ENCODE measurements at regions of chr20 and their contacts with region 1.

Region 1: GRCh38 chr20:63009045-63009961 is 2.5 kb upstream of the BHLHE23 start:
- DNase-seq: peak; percentile 96
- H3K27ac ChIP-seq: no peak overlapping the region
- CTCF ChIP-seq: peak; percentile 98

Region 2: DNA sequence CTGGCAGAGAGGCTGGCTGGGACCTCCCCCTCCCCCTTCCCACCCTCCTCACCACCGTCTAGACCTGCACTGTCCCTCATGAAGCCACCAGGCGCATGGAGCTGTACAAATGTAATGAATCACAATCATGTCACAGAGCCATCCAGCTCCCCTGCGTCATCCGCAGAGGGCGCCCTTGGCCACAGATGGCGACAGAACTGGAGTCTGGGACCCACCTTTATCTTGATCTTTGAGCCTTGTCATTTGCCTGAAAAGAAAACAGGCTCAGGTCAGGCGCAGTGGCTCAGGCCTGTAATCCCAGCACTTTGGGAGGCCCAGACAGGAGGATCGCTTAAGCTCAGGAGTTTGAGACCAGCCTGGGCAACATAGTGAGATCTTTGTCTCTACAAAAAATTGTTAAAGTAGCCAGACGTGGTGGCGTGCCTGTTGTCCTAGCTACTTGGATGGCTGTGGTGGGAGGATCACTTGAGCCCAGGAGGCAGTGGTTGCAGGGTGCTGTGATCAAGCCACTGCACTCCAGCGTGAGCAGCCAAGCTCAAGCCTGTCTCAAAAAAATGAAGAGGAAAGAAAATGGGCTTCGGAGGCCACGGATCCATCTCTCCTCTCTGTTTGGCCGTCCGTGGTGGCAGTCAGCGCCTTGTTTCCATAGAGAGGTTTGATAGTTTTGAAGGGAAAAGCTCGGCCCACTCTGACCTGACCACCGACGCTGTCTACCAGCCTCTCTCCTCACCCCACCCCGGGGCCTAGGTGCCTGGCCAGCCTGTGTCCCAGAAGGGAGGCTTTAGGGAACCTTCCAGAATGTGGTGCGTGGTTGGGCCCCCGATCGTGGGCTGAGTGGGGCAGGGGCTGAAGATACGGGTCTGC is 186.3 kb before region 1 on chr20:
- CTCF ChIA-PET with region 1: interaction called, 13 read pairs
- POLR2A ChIA-PET with region 1: no interaction called
- DNase-seq: peak; percentile 55
- H3K27ac ChIP-seq: peak overlapping the region; percentile 47
- CTCF ChIP-seq: peak; percentile 65

Region 3: DNA sequence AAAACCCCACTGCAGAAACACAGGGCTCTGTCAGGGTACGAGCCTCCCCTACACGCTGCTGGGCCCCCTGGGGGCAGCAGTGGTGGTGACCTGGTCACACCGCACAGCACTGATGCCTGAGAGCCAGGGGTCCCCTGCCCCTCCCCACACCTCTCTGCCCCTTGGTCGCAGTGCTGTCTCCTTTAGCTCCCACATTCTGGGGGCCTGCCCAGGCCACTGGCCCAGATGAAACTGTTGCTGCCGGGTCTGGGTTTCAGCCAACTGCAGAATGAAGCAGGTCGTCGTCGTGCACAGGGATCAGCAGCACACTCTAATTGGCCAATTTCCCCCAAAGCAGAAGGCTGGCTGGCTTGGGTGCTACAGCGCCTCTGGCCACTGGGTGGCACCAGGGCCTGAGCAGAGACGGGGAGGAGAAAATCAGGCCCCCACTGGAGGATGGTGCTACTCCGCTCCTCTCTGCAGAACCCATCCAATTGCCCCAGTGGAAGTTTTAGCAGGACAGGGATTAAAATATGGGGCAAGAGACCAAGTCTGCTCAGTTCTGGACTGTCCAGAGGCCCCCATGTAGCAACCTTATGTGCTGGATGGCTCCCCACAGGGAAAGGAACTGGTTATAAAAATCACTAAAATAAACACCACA is 109.1 kb before region 1 on chr20:
- CTCF ChIA-PET with region 1: interaction called, 13 read pairs
- POLR2A ChIA-PET with region 1: no interaction called
- DNase-seq: peak; percentile 97
- H3K27ac ChIP-seq: peak overlapping the region; percentile 78
- CTCF ChIP-seq: peak; percentile 98

Region 4: GRCh38 chr20:62972270-62973032 is 36.9 kb before region 1 on chr20:
- CTCF ChIA-PET with region 1: interaction called, 24 read pairs
- POLR2A ChIA-PET with region 1: no interaction called
- DNase-seq: peak; percentile 98
- H3K27ac ChIP-seq: no peak overlapping the region
- CTCF ChIP-seq: peak; percentile 98

Region 5: DNA sequence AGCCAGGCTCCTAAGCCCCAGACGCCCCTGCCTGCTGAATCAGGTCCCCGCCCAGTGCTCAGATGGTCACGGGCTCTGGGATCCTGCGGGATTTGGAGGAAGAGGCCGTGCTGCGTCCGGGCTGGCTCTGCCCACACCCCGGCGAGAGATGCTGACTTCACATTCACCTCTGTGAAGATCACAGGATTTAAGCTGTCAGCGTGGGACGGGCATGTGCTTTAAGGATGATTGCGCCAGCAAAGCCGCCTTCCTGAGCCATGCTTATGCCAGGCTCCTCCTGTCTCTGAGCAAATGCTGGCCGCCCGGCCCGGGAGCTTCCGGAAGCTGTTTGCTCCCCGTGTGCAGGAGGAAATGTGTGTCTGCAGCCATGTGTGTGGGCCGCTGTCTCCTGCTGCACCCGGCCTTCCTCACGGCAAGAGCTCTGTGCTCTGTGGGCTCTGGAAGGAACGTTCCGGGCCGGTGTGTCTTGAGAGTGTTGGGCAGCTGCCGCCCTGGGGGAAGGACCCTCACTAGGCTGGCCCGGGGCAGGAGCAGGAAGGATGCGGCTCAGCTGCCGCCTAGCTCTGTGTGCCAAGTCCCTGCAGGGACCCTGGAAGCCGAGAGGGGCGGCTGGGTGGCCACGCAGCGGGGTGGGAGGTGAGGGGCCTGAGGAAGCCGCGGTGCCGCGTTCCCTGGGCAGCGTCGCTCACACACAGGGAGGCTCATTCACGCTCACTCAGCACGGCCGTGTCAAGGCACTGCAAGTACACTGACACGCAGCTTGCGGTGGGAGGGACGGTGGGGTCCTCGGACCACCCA is 16.4 kb after region 1 on chr20:
- CTCF ChIA-PET with region 1: interaction called, 14 read pairs
- POLR2A ChIA-PET with region 1: interaction called, 3 read pairs
- DNase-seq: peak; percentile 69
- H3K27ac ChIP-seq: peak overlapping the region; percentile 27
- CTCF ChIP-seq: no peak

Measured in RWPE1 (cell line).